Motor neuron (in vitro differentiated cells): ENCODE measurements at regions of chr3 and their contacts with region 1.

Region 1: DNA sequence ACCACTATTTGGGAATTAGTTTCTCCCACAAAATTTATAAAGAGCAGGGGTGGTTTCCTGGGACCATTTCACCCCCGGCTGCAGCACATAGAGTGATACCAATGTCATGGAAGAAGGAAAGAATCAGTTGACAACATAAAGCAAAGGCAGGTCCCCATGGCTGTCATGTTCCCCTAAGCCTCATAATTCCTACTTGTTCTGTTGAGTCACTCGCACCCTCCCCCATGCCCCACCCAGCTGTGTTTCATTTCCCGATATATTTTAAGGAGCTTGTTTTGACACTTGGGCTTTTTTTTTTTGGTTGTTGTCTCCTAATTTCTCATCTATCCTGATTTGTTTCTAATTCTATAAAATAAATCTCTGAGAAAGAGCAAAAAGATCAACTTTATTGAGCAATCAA is 24.9 kb downstream of the ERC2 start:
- ATAC-seq: no peak
- H3K4me3 ChIP-seq: no peak overlapping the region
- H3K27ac ChIP-seq: no peak overlapping the region
- H3K4me1 ChIP-seq: no peaks in the 10 kb centered on the region

Region 2: GRCh38 chr3:56347219-56347871 is 96.0 kb before region 1 on chr3:
- in situ Hi-C with region 1: loop called in 1 of 9 experiments (anchors 10 kb)
- ATAC-seq: peak in 3 of 8 experiments; percentile 31 to 57 (median 52)
- H3K4me3 ChIP-seq: no peak overlapping the region
- H3K27ac ChIP-seq: no peak overlapping the region
- H3K4me1 ChIP-seq: peaks cover 0 to 6% of the 10 kb centered on the region in 2 donors

Region 3: GRCh38 chr3:56573501-56573900 is 130.1 kb after region 1 on chr3:
- in situ Hi-C with region 1: no loop called
- ATAC-seq: peak in 3 of 8 experiments; percentile 12 to 43 (median 37)
- H3K4me3 ChIP-seq: no peak overlapping the region
- H3K27ac ChIP-seq: no peak overlapping the region
- H3K4me1 ChIP-seq: no peaks in the 10 kb centered on the region

Region 4: GRCh38 chr3:56667973-56668579 is 224.7 kb after region 1 on chr3:
- in situ Hi-C with region 1: no loop called
- ATAC-seq: no peak
- H3K4me3 ChIP-seq: no peak overlapping the region
- H3K27ac ChIP-seq: no peak overlapping the region
- H3K4me1 ChIP-seq: no peaks in the 10 kb centered on the region

Region 5: DNA sequence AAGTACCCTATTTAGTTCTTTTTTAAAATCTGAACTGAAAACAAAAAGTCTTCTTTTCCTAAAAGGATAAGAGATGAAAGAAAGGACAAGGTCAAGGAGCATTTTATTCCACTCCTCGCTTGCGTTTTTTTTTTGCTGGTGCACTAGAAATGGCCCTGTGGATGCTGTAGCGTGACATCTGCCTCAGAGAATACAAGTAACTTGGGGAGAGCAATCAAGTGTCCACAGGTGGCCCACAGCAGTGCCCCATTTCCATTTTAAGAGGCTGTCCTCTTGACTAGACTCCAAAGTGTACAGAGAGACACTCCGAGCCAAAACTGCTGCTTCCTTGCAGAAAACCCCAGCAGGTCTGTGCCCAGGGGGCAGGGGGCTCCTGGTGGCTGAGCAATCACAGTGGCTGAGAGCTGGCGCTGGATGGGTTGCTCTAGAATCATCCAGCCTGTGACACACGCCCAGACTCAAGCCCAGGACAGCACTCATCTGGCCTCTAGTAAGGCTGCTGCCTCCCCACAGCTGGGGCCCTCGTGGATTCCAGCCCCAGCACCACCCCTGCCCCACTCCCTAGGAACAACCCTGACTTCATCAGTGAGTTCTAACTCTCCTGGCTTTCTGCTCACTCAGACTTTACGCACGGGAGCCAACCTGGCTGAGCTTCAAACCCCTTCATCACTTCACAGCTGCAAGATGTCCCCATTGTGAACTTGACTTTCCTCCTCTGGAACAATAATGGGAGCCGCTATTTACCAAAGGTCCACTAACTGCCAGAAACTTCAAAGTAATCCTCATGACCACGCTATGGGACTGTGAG is 546.0 kb after region 1 on chr3:
- in situ Hi-C with region 1: no loop called
- ATAC-seq: peak; percentile 11 to 85 (median 29)
- H3K4me3 ChIP-seq: no peak overlapping the region
- H3K27ac ChIP-seq: no peak overlapping the region
- H3K4me1 ChIP-seq: no peaks in the 10 kb centered on the region

Region 6: DNA sequence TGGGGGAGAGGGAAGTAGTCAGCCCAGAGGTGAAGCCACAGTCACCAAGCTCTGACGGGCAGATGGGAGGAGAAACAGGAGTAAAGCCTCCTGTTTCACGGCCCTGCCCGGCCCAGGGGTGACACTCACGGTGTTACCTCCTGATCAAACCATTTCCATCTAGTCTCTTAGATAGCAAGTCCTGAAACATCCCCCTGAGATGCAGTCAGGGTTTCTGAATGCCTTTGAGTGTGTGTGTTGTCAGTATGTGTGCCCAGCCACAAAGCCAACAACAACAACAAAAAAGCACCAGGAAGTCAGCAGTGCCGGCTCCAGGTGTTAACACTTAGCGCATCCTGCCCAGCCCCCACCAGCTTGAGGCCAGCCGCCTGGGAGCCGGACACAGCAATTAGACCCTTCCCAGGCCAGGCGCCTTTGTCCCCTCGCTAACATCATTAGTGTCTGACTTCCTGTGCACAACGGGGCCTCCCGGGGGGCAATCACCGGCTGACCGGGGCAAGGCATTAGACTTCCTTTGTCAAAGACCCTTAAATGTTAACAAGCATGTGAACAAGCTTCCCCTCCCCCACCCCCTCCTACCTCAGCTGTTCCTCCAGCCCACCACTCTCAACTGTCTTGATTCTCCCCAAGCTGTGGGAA is 687.3 kb after region 1 on chr3:
- in situ Hi-C with region 1: no loop called
- ATAC-seq: peak in 5 of 8 experiments; percentile 77 to 87 (median 83)
- H3K4me3 ChIP-seq: no peak overlapping the region
- H3K27ac ChIP-seq: peak overlapping the region in 1 of 2 donors; percentile 38
- H3K4me1 ChIP-seq: peaks cover 35 to 47% of the 10 kb centered on the region in 2 donors